ENCODE measurements at regions of chr11 and their contacts with region 1.

Region 1: DNA sequence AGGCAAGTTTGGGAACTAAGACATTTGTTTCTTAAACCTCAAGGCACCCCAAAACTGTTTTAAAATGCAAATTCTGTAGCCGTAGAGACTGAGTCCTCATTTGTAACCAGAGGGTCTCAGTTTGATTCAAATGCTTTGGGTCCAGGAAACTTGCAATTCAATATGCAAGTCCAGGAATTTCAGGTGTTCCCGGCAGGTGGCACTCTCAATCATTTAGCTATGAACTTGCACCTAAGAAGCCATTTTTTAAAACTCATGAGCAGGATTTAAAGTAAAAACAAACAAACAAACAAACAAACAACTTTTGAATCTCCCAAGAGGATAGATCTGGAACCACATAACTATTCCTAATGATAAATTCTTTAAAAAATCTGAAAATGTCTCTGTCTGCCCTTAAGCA is 8.7 kb upstream of the ABTB2 start:
- DNase-seq: peak; percentile 62
- H3K4me3 Mint-ChIP-seq: no peak overlapping the region
- H3K27ac Mint-ChIP-seq: no peak overlapping the region
- H3K4me1 Mint-ChIP-seq: peaks cover 8% of the 10 kb centered on the region
- H3K27me3 Mint-ChIP-seq: no peaks in the 10 kb centered on the region
- CTCF ChIP-seq: peak; percentile 46

Region 2: DNA sequence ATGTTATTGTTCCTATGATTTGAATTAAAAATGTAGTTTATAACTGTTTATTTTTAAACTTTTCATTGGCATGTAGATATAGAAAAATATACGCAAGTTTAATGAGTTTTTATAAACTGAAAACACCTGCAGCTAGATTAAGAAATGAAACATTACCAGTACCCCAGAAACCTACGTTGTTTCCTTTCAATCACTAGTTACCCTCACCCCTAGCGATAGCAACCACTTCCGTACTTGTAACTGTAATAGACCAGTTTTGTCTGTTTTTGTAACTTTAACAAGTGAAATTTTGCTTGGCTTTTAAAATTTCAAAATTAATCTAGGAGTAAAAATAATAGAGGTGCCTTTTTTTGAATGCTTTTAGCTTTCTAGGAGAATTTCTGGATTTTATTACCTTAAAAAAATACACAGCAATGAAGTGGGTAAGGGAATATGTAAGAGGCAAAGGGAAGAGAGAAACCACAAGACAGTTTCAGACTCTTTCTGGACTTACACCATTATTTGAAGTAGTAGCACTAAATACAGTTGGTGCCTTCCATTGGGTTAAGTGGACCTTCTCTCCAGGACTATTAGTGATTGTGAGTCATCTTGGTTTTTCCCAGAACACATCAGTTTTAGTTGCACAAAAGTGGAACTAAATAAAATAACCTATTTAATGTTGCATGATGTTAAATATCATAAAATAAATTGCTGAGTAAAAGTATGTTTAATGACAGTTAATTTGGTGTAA is 279.8 kb before region 1 on chr11:
- CTCF ChIA-PET with region 1: no interaction called
- intact Hi-C with region 1: no loop called
- DNase-seq: no peak
- H3K4me3 Mint-ChIP-seq: no peak overlapping the region
- H3K27ac Mint-ChIP-seq: no peak overlapping the region
- H3K4me1 Mint-ChIP-seq: peaks cover 19% of the 10 kb centered on the region
- H3K27me3 Mint-ChIP-seq: no peaks in the 10 kb centered on the region
- CTCF ChIP-seq: no peak

Region 3: DNA sequence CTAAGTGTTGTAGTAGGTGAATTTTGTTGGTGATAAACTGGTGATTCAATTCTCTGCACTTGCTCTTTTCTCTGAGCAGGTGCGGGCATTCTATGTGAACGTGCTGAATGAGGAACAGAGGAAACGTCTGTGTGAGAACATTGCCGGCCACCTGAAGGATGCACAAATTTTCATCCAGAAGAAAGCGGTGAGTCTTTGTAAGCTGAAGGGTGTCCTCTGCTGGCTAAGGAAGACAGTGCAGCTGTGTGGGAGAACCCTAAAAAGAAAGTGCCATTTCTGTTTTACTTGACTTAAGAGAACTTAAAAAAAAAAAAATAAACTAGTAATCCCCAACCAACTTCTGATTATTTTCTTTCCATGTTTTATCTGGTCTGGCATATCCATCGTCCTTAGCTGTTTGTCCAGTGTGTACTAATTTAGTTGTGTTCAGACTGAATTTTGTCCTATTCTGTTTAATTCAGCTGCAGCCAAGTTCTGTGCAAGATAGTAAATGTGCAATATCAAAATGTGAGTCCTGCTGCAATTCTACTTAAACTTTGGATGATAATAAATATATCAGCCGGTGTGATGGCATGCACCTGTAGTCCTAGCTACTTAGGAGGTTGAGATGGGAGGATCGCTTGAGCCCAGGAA is 101.8 kb after region 1 on chr11:
- CTCF ChIA-PET with region 1: interaction called, 34 read pairs
- intact Hi-C with region 1: loop called (anchors 1 kb)
- DNase-seq: peak; percentile 62
- H3K4me3 Mint-ChIP-seq: no peak overlapping the region
- H3K27ac Mint-ChIP-seq: no peak overlapping the region
- H3K4me1 Mint-ChIP-seq: peaks cover 10% of the 10 kb centered on the region
- H3K27me3 Mint-ChIP-seq: no peaks in the 10 kb centered on the region
- CTCF ChIP-seq: peak; percentile 76

Region 4: DNA sequence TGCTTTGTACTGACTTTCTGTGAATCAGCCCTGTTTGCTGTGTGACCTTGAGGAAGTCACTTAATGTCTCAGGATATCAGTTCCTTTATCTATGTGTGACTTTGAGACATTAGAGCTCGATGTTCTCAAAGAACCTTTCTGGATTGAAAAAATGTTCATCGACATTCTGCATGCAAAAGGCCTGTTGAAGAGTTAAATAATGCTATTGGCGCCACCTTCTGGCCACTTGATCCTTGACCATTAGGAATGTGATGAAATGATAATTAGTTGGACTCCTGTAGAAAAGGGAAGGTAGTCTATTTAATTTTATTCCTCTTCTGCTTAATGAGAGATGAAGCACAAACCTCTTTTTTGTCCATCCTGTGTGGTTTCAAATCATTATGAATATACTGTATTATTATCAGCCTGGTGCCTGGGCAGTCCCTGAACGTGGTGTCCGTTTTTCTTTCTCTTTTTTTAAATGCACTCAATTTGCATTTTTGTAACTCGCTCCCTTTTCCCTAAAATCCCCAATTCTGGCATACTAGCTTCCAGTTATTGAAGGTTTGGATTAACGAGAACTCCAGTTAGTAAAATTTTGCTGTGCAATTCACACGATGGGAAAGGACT is 126.4 kb after region 1 on chr11:
- CTCF ChIA-PET with region 1: interaction called, 13 read pairs
- intact Hi-C with region 1: loop called (anchors 1 kb)
- DNase-seq: peak; percentile 58
- H3K4me3 Mint-ChIP-seq: no peak overlapping the region
- H3K27ac Mint-ChIP-seq: no peak overlapping the region
- H3K4me1 Mint-ChIP-seq: peaks cover 11% of the 10 kb centered on the region
- H3K27me3 Mint-ChIP-seq: peaks cover 14% of the 10 kb centered on the region
- CTCF ChIP-seq: peak; percentile 79

Measured in Calu3 (cell line).